Adrenal gland (tissue), 19 donors: ENCODE measurements at regions of chr11 and their contacts with region 1.

Region 1: DNA sequence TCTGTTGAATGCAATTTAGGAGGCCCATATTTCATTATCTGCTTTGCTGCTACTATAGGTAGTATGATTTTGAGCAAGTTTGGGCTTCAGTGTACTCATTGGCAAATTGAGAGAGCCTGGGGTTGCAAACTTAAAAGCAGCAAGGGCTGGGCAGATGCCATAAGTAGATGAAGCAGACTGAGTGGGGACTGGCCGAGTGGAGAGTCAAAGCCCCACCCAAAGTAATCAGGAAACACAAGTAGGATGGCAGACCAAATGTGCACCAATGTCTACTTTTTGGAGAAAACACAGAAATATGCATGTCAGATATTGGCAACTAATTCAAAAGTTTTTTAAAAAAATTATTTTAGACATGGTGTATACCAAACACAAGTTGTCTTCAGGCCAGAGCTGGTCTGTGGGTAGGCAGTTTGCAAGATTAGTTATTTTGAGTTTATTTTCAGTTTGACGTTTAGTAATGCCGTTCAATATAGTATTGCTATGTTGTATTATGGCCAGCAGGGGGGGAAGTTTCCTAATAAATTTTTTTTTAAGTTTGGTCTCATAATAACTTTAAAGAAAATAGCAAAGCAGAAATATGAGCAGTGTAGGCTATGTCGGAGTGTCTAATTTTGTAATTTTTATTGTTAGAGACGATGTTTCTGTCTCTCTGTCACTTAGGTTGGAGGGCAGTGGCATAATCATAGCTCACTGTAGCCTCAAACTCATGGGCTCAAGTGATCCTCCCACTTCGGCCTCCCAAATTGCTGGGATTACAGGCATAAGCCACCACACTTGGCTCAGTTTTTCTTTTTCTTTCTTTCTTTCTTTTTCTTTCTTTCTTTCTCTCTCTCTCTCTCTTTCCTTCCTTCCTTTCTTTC is 105.1 kb downstream of the HIPK3 start:
- DNase-seq: peak in 1 of 7 donors; percentile 27
- H3K4me3 ChIP-seq: no peak overlapping the region
- H3K27ac ChIP-seq: no peak overlapping the region
- H3K4me1 ChIP-seq: no peaks in the 10 kb centered on the region
- H3K27me3 ChIP-seq: no peaks in the 10 kb centered on the region
- CTCF ChIP-seq: peak; percentile 64 to 79 (median 74)
- POLR2A ChIP-seq: no peak

Region 2: GRCh38 chr11:33402066-33402465 is 39.8 kb after region 1 on chr11:
- intact Hi-C with region 1: no loop called
- DNase-seq: no peak
- H3K4me3 ChIP-seq: no peak overlapping the region
- H3K27ac ChIP-seq: no peak overlapping the region
- H3K4me1 ChIP-seq: no peaks in the 10 kb centered on the region
- H3K27me3 ChIP-seq: no peaks in the 10 kb centered on the region
- CTCF ChIP-seq: no peak
- POLR2A ChIP-seq: no peak

Region 3: DNA sequence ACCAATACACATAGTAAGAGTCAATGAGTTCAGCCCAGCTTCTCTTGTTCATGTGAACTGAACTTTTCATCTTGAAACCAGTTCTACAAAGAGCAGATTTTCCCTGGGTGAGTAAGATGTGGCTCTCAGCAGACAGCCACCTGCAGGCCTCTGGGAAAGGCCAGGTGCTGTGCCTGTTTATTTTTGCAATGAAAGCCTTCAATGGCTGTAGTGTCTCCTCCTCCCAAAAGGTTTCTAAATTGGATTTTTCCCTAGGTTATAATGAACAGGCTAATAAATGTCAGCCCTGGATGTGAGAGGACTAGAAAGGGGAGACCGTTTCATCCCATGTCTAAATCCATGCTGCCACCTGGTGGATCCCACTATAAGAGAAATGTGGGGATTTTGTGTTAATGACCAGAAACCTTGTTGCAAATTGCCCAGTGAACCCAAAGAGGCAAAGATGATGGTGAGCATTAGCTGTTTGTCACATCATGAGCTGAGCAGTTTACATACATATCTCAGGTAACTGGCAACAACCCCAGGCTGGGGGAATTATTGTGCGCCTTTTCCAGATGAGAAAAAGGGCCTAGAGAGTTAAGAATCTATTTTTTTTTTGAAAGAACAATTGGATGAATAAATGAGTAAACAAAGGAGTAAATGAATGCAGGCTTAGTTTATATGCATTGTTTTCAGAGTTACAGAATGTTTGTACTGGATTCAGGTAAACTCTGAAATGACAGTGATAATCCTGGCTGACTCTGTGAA is 325.6 kb after region 1 on chr11:
- intact Hi-C with region 1: loop called (anchors 2 to 5 kb)
- DNase-seq: peak; percentile 50 to 76 (median 62)
- H3K4me3 ChIP-seq: no peak overlapping the region
- H3K27ac ChIP-seq: no peak overlapping the region
- H3K4me1 ChIP-seq: peaks cover 5 to 19% of the 10 kb centered on the region in 2 donors
- H3K27me3 ChIP-seq: no peaks in the 10 kb centered on the region
- CTCF ChIP-seq: peak; percentile 41 to 83 (median 74)
- POLR2A ChIP-seq: no peak

Region 4: GRCh38 chr11:33742249-33742851 is 380.1 kb after region 1 on chr11:
- intact Hi-C with region 1: loop called in 1 of 2 experiments (anchors 10 kb)
- DNase-seq: no peak
- H3K4me3 ChIP-seq: no peak overlapping the region
- H3K27ac ChIP-seq: no peak overlapping the region
- H3K4me1 ChIP-seq: no peaks in the 10 kb centered on the region
- H3K27me3 ChIP-seq: no peaks in the 10 kb centered on the region
- CTCF ChIP-seq: peak; percentile 32 to 64 (median 56)
- POLR2A ChIP-seq: no peak

Region 5: GRCh38 chr11:33829433-33830141 is 467.3 kb after region 1 on chr11:
- intact Hi-C with region 1: loop called in 1 of 2 experiments (anchors 10 kb)
- DNase-seq: peak; percentile 35 to 85 (median 60)
- H3K4me3 ChIP-seq: peak overlapping the region in 2 of 4 donors; percentile 14 to 59
- H3K27ac ChIP-seq: no peak overlapping the region
- H3K4me1 ChIP-seq: peaks cover 7 to 8% of the 10 kb centered on the region in 2 donors
- H3K27me3 ChIP-seq: peaks cover 24% of the 10 kb centered on the region
- CTCF ChIP-seq: peak; percentile 43 to 81 (median 74)
- POLR2A ChIP-seq: no peak